Calu3 (cell line): ENCODE measurements at regions of chr5 and their contacts with region 1.

Region 1: GRCh38 chr5:115098041-115098702 is 71.5 kb downstream of the TRIM36 start:
- DNase-seq: peak; percentile 61
- H3K4me3 Mint-ChIP-seq: no peak overlapping the region
- H3K27ac Mint-ChIP-seq: no peak overlapping the region
- H3K4me1 Mint-ChIP-seq: no peaks in the 10 kb centered on the region
- H3K27me3 Mint-ChIP-seq: peaks cover 3% of the 10 kb centered on the region
- CTCF ChIP-seq: peak; percentile 62

Region 2: DNA sequence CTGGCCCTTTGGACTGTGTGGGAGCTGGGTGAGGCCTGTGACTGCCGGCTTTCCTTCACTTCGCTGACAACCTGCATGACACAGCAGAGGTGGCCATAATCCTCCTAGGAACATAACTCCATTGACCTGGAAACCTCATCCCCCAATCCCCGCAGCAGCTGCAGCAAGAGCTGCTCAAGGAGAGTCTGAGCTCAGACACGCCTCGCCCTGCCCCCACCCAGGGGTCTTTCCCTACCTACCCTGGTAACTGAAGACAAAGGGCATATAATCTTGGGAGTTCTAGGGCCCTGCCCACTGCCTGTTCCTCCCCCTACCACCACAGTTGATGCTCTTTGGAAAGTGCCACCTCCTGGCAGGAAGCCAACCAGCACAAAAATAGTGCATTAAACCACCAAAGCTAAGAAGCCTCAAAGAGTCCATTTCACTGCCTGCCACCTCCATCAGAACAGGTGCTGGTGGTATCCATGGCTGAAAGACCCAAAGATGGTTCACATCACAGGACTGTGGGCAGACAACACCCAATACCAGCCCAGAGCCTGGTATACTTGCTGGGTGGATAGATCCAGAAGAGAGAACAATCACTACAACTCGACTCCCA is 53.1 kb after region 1 on chr5:
- CTCF ChIA-PET with region 1: no interaction called
- intact Hi-C with region 1: no loop called
- DNase-seq: no peak
- H3K4me3 Mint-ChIP-seq: no peak overlapping the region
- H3K27ac Mint-ChIP-seq: no peak overlapping the region
- H3K4me1 Mint-ChIP-seq: no peaks in the 10 kb centered on the region
- H3K27me3 Mint-ChIP-seq: no peaks in the 10 kb centered on the region
- CTCF ChIP-seq: no peak

Region 3: GRCh38 chr5:115169487-115170133 is 71.4 kb after region 1 on chr5 and contains the start of gene TRIM36:
- CTCF ChIA-PET with region 1: no interaction called
- intact Hi-C with region 1: loop called (anchors 2 kb)
- DNase-seq: peak; percentile 99
- H3K4me3 Mint-ChIP-seq: peak within 1 kb of the TSS; percentile 94
- H3K27ac Mint-ChIP-seq: peak within 1 kb of the TSS; percentile 73
- H3K4me1 Mint-ChIP-seq: no peaks in the 10 kb centered on the region
- H3K27me3 Mint-ChIP-seq: peaks cover 10% of the 10 kb centered on the region
- CTCF ChIP-seq: no peak
- total RNA-seq, gene TRIM36: 4.4 and 5.4 TPM in 2 replicates

Region 4: DNA sequence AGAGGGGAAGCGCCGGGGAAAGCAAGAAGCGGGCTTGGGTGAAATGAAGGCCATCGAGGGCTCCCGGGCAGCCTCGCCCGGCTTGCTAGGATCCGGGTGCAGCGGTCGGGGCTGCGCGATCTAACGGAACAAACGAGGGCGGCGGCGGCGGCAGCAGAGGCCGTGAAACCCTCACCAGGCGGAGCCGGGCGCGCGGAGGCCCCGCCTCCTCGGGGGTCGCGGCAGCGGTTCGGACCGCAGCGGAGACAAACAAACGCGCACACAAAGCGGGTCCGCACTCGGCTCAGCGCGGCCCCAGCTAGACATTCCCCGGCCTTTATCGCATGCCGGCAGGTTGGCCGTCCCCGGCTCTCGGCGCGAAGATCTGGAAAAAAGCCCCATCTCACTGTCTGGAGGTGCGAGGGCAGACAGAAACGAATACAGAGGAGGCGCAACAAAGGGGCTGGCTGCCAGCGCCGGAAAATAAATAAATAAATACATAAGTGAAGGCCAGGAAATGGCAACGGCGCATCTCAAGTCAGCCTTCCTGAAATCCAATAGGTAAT is 82.1 kb after region 1 on chr5:
- CTCF ChIA-PET with region 1: no interaction called
- intact Hi-C with region 1: loop called (anchors 5 kb)
- DNase-seq: peak; percentile 38
- H3K4me3 Mint-ChIP-seq: peak overlapping the region; percentile 86
- H3K27ac Mint-ChIP-seq: no peak overlapping the region
- H3K4me1 Mint-ChIP-seq: no peaks in the 10 kb centered on the region
- H3K27me3 Mint-ChIP-seq: peaks cover 53% of the 10 kb centered on the region
- CTCF ChIP-seq: no peak

Region 5: GRCh38 chr5:115246361-115246991 is 148.3 kb after region 1 on chr5:
- CTCF ChIA-PET with region 1: interaction called, 7 read pairs
- intact Hi-C with region 1: loop called (anchors 1 kb)
- DNase-seq: no peak
- H3K4me3 Mint-ChIP-seq: no peak overlapping the region
- H3K27ac Mint-ChIP-seq: no peak overlapping the region
- H3K4me1 Mint-ChIP-seq: peaks cover 31% of the 10 kb centered on the region
- H3K27me3 Mint-ChIP-seq: no peaks in the 10 kb centered on the region
- CTCF ChIP-seq: peak; percentile 70

Region 6: DNA sequence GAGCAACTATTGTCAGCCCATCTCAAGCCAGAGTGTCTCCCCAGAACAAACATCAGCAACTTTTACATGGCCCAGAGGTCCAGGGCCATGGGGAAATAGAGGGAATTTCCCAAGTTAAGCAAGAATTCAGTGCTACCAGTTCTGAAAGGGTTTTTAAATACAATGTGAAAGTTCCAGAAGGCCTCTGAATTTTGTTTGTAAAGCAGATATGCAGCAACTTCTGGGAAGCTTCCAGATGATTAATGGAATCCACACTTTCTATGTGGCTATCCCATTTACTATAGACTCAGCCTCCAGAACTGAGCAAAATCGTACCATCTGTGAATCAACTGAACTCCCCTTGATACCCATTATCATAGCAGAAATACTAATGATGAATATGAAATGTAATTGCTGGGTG is 352.6 kb after region 1 on chr5:
- CTCF ChIA-PET with region 1: no interaction called
- intact Hi-C with region 1: no loop called
- DNase-seq: no peak
- H3K4me3 Mint-ChIP-seq: peak overlapping the region; percentile 7
- H3K27ac Mint-ChIP-seq: peak overlapping the region; percentile 83
- H3K4me1 Mint-ChIP-seq: no peaks in the 10 kb centered on the region
- H3K27me3 Mint-ChIP-seq: no peaks in the 10 kb centered on the region
- CTCF ChIP-seq: no peak

Region 7: GRCh38 chr5:115586601-115587048 is 488.5 kb after region 1 on chr5:
- CTCF ChIA-PET with region 1: no interaction called
- intact Hi-C with region 1: loop called (anchors 1 kb)
- DNase-seq: no peak
- H3K4me3 Mint-ChIP-seq: no peak overlapping the region
- H3K27ac Mint-ChIP-seq: no peak overlapping the region
- H3K4me1 Mint-ChIP-seq: no peaks in the 10 kb centered on the region
- H3K27me3 Mint-ChIP-seq: no peaks in the 10 kb centered on the region
- CTCF ChIP-seq: peak; percentile 54